Dendritic cell treated with granulocyte-macrophage colony-stimulating factor and Interleukin-4, amounts not matched to agents 40 ng/mL and 50 ng/mL, for 4 days (primary cell): ENCODE measurements at regions of chrX and their contacts with region 1.

Region 1: GRCh38 chrX:134484039-134484438 is 24.1 kb downstream of the HPRT1 start:
- H3K4me3 Mint-ChIP-seq: no peak overlapping the region
- H3K27ac Mint-ChIP-seq: no peak overlapping the region
- H3K4me1 Mint-ChIP-seq: no peaks in the 10 kb centered on the region
- H3K27me3 Mint-ChIP-seq: no peaks in the 10 kb centered on the region

Region 2: DNA sequence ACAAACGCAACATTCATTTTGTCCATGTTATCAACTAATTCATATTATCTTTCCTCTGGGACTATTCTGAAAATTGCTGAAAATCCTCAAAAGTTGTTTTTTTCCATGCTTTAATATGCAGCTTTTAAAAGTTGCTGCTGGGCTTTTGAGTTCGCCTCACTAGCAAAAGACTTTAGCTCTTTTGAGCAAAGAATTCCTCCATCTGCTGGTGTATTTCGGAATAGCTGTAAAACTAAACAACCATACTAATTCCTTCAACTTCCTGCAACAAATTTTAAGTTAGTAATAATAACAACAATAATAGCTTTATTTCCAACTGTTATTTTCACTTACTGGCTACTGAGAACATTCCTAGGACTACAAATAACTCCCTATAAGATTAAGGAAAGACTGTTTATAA is 298.8 kb after region 1 on chrX:
- intact Hi-C with region 1: loop called (anchors 5 kb)
- H3K4me3 Mint-ChIP-seq: no peak overlapping the region
- H3K27ac Mint-ChIP-seq: no peak overlapping the region
- H3K4me1 Mint-ChIP-seq: no peaks in the 10 kb centered on the region
- H3K27me3 Mint-ChIP-seq: no peaks in the 10 kb centered on the region

Region 3: DNA sequence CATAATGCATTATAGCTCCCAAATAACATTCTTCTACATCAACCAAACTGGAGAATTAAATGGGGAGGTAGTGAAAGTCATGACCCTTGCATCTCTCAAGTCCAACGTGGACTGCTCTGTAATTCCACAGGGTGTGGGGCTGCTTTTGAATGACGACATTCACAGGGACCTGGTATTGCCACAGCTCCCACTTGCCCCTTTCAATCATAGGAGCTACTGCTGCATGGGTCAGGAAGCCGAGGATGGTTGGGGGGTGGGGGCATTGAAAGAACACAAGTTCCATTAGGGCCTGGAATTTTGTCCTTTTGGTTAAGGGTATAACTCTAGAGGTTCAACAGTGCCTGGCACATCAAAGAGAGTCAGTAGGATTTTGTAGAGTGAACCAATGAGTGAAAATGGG is 694.6 kb after region 1 on chrX:
- intact Hi-C with region 1: no loop called
- H3K4me3 Mint-ChIP-seq: no peak overlapping the region
- H3K27ac Mint-ChIP-seq: no peak overlapping the region
- H3K4me1 Mint-ChIP-seq: peaks cover 7% of the 10 kb centered on the region
- H3K27me3 Mint-ChIP-seq: peaks cover 6% of the 10 kb centered on the region